Activated CD4-positive, alpha-beta T cell treated with anti-CD3 and anti-CD28 coated beads for 36 hours (primary cell): ENCODE measurements at regions of chr10 and their contacts with region 1.

Region 1: DNA sequence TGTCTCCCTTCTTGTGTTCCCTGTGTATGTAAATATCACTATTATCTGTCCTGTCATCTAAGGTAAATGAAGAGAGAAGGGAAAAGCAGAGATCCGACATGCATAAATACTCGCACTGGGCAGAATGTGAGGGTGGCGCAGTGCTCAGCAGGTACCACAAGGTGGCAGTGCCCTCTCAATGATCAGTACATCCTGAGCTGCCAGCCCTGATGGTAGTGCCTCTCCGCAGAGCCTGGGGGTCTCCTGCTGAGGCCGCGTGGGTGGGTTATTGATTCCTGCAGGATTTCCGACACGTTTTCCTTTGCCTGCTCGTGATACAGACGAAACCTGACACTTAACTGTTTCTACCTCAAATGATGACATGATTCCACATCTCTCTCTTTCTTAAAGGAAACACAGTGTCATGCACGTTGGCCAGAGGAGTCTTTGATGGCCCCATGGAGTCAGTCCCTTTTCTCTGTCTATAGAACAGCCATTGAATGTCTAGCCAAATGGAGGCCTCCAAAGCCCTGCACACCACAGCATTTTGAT is 19.8 kb downstream of the RGR start:
- DNase-seq: peak; percentile 86
- ATAC-seq: peak; percentile 80
- H3K4me3 Mint-ChIP-seq: no peak overlapping the region
- H3K27ac Mint-ChIP-seq: no peak overlapping the region
- H3K4me1 Mint-ChIP-seq: peaks cover 27% of the 10 kb centered on the region
- H3K27me3 Mint-ChIP-seq: peaks cover 10% of the 10 kb centered on the region

Region 2: DNA sequence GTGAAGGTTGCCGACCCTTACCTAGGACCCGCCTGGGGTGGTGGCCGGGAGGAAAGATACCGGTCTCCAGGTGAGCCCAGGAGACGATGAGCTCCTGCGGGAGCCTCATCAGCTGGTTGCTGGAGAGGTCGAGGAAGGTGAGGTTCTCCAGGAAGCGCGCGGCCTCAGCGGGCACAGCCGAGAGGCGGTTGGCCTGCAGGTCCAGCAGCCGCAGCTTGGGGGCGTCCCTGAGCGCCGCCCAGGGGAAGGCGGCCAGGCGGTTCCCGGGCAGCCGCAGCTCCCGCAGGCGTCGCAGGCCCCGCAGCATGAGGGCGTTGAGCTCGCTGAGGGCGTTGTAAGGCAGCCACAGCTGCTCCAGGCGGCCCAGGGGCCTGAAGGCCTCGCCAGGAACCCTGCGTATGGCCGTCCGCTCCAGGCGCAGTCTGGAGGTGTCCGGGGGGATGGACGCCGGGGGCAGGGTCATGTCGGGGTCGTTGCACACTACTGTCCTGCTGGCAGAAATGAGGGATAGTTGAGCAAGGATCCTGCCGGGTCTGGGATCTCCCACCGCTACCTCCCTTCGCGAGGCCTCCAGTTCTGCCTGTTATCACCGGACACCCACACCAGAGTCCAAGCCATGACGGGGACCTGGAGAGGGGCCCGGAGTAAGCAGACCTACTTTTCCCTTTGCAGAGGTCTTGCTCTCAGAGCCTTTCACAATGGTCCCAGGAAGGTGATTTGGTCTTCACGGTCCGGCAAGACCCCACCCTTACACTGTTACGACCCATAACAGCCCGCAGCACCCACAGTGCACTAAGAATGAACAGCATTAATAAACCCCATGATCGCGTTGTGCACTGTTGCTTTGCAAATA is 27.3 kb before region 1 on chr10:
- CTCF ChIA-PET with region 1: no interaction called
- POLR2A ChIA-PET with region 1: no interaction called
- intact Hi-C with region 1: no loop called
- DNase-seq: peak; percentile 47
- ATAC-seq: no peak
- H3K4me3 Mint-ChIP-seq: no peak overlapping the region
- H3K27ac Mint-ChIP-seq: no peak overlapping the region
- H3K4me1 Mint-ChIP-seq: no peaks in the 10 kb centered on the region
- H3K27me3 Mint-ChIP-seq: peaks cover 9% of the 10 kb centered on the region

Region 3: GRCh38 chr10:84308481-84309304 is 44.0 kb after region 1 on chr10:
- CTCF ChIA-PET with region 1: interaction called, 11 read pairs
- POLR2A ChIA-PET with region 1: interaction called, 5 read pairs
- intact Hi-C with region 1: loop called (anchors 1 to 5 kb)
- DNase-seq: peak; percentile 75
- ATAC-seq: peak; percentile 67
- H3K4me3 Mint-ChIP-seq: peak overlapping the region; percentile 47
- H3K27ac Mint-ChIP-seq: peak overlapping the region; percentile 90
- H3K4me1 Mint-ChIP-seq: peaks cover 37% of the 10 kb centered on the region
- H3K27me3 Mint-ChIP-seq: no peaks in the 10 kb centered on the region

Region 4: DNA sequence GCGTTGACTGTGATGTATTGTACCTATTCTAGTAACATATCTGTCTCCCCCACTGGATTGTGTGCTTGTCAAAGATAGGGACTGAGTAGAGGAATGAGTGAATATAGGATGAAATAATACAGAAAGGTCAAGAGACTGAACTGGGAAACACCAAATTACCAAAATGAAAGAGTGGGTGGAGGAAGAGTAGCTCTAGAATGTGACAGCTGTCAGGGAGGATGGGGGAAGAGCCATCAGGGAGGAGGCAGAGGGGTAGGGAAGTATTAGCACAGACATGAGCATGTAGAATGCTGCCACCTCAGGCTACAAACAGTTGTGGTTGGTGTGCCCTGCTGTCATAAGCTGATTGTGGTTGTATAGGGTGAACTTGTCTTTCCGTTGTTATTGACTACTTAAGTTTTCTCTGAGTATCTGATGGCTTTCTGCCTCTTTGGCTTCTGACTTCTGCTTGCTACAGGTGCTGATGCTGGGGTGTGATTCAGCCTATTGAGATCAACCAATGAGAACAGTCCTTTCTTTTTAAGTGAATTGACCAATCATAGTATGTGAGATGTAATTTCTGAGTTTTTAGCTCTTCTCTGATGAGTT is 69.3 kb after region 1 on chr10:
- CTCF ChIA-PET with region 1: interaction called, 24 read pairs
- POLR2A ChIA-PET with region 1: interaction called, 6 read pairs
- intact Hi-C with region 1: no loop called
- DNase-seq: peak; percentile 76
- ATAC-seq: peak; percentile 83
- H3K4me3 Mint-ChIP-seq: peak overlapping the region; percentile 52
- H3K27ac Mint-ChIP-seq: peak overlapping the region; percentile 93
- H3K4me1 Mint-ChIP-seq: peaks cover 38% of the 10 kb centered on the region
- H3K27me3 Mint-ChIP-seq: no peaks in the 10 kb centered on the region

Region 5: DNA sequence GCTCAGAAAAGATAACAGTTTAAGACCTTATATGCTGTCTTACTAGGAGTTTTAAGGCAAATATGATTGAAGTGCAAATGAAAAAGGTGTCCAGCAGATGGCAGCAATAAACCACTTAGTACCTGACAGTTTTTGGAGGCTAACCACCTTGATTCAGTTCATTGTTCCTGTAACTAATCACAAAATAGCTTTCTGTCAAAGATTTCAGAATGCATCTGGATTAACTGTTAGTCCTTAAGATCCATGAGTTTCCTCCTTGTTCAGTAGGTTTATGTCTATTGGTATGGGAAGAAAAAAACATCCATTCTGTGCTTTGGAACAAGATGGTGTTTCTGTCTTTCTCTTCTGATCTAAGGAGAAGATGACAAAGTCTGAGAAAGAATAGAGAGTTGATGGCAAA is 110.3 kb after region 1 on chr10:
- CTCF ChIA-PET with region 1: interaction called, 12 read pairs
- POLR2A ChIA-PET with region 1: no interaction called
- intact Hi-C with region 1: loop called (anchors 1 kb)
- DNase-seq: peak; percentile 53
- ATAC-seq: peak; percentile 72
- H3K4me3 Mint-ChIP-seq: no peak overlapping the region
- H3K27ac Mint-ChIP-seq: no peak overlapping the region
- H3K4me1 Mint-ChIP-seq: peaks cover 41% of the 10 kb centered on the region
- H3K27me3 Mint-ChIP-seq: no peaks in the 10 kb centered on the region

Region 6: DNA sequence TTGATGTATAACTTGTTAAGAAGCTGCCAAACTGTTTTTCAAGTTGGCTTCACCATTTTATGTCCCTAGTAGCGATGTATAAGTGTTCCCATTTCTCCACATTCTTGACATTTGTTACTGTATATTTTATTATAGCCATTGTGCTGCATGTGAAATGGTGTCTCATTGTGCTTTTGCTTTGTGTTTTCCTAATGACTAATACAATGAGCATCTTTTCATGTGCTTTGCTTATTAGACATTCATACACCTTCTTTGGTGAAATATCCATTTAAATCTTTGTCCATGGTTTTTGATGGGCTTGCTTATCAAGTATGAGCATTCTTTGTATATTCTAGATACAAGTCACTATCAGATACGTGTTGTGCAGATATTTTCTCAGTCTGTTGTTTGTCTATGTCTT is 266.7 kb after region 1 on chr10:
- CTCF ChIA-PET with region 1: interaction called, 231 read pairs
- POLR2A ChIA-PET with region 1: no interaction called
- intact Hi-C with region 1: no loop called
- DNase-seq: no peak
- ATAC-seq: no peak
- H3K4me3 Mint-ChIP-seq: no peak overlapping the region
- H3K27ac Mint-ChIP-seq: no peak overlapping the region
- H3K4me1 Mint-ChIP-seq: peaks cover 14% of the 10 kb centered on the region
- H3K27me3 Mint-ChIP-seq: no peaks in the 10 kb centered on the region